ENCODE measurements at regions of chr19 and their contacts with region 1.

Region 1: GRCh38 chr19:21328885-21329605 is at the start of gene ZNF708:
- DNase-seq: peak; percentile 47 to 89
- ATAC-seq: peak; percentile 100
- H3K4me3 ChIP-seq: peak within 1 kb of the TSS; percentile 73
- H3K27ac ChIP-seq: peak within 1 kb of the TSS; percentile 83 to 89
- H3K4me1 ChIP-seq: no peaks in the 10 kb centered on the region
- CTCF ChIP-seq: no peak
- EP300 ChIP-seq: no peak
- POLR2A ChIP-seq: peak; percentile 59
- RAD21 ChIP-seq: no peak
- polyA plus RNA-seq, gene ZNF708: 2.2 and 2.5 TPM in 2 replicates

Region 2: DNA sequence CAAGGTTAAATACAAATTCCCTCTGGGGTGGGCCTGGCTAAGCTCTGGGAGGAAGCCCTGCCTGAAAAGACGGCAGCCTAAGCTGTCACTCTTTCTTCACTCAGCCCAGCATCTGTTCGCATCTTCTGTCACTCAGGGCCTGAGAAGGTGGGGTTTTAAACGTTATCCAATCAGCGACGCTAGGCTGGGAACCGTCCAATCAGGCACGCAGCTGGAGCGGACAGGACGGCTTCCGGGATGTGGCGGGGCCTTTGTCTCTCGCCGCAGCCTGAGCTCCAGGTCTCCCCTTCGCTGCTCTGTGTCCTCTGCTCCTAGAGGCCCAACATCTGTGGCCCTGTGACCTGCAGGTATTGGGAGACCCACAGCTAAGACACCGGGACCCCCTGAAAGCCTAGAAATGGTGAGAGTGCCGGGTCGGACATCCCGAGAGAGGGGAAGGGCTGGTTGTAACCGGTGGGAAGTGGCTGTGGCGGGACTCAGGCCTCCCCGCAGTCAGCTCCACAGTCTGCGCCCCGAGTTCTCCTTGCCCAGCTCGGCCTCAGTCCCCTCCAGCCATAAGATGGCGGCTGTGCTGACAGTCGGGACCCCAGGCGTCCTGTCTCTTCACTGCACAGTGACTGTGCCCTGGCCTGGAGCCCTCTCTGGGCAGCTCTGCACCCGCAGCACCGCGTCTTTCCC is 187.1 kb before region 1 on chr19 and contains the start of gene ZNF431:
- CTCF ChIA-PET with region 1: no interaction called
- POLR2A ChIA-PET with region 1: interaction called, 12 read pairs
- DNase-seq: peak; percentile 59 to 94
- ATAC-seq: peak; percentile 100
- H3K4me3 ChIP-seq: peak within 1 kb of the TSS; percentile 69
- H3K27ac ChIP-seq: peak within 1 kb of the TSS; percentile 74 to 89
- H3K4me1 ChIP-seq: no peaks in the 10 kb centered on the region
- CTCF ChIP-seq: no peak
- EP300 ChIP-seq: no peak
- POLR2A ChIP-seq: peak; percentile 54
- RAD21 ChIP-seq: no peak
- polyA plus RNA-seq, gene ZNF431: 4.6 and 6.1 TPM in 2 replicates

Region 3: DNA sequence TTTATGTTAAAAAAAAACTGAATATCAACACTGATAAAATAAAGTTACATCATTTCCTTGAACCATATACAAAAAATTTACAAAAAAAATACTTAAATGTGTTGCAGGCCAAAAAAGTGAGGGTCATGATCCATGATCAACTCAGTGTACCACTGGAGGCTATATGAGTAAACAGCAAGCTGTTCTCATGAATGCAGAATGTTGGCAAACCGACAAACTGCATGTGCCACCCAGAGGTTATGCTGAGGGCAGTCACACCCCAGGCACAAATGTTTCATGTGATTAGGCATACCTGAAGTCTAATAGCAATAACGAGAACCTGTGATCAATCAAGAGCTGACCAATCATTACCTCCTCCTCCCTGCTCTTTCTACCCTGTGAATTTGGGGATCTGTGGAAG is 95.4 kb before region 1 on chr19:
- CTCF ChIA-PET with region 1: no interaction called
- POLR2A ChIA-PET with region 1: no interaction called
- DNase-seq: no peak
- ATAC-seq: no peak
- H3K4me3 ChIP-seq: no peak overlapping the region
- H3K27ac ChIP-seq: no peak overlapping the region
- H3K4me1 ChIP-seq: no peaks in the 10 kb centered on the region
- CTCF ChIP-seq: no peak
- EP300 ChIP-seq: no peak
- POLR2A ChIP-seq: no peak
- RAD21 ChIP-seq: no peak